Activated CD4-positive, alpha-beta T cell treated with anti-CD3 and anti-CD28 coated beads for 36 hours (primary cell): ENCODE measurements at regions of chr1 and their contacts with region 1.

Region 1: DNA sequence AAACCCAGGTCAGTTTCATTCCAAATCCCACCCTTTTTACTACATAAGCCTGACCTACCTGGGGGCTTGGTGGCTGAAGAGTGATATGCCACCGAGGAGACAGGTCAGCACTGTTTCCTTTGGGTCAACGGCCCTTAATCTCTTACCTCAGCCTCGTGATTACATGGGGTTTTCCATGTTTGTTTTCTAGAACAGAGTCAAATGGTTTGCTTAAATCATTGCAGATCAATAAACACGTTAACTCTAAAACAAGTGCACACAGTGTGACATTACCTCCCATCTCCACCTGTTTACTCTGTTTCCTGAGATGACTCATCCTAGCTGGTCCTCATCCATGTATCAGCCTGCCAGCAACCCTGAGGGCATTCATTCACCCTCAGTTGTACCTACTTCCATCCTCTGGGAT is 40.8 kb upstream of the TP53BP2 start:
- DNase-seq: no peak
- ATAC-seq: no peak
- H3K4me3 Mint-ChIP-seq: no peak overlapping the region
- H3K27ac Mint-ChIP-seq: no peak overlapping the region
- H3K4me1 Mint-ChIP-seq: no peaks in the 10 kb centered on the region
- H3K27me3 Mint-ChIP-seq: no peaks in the 10 kb centered on the region

Region 2: DNA sequence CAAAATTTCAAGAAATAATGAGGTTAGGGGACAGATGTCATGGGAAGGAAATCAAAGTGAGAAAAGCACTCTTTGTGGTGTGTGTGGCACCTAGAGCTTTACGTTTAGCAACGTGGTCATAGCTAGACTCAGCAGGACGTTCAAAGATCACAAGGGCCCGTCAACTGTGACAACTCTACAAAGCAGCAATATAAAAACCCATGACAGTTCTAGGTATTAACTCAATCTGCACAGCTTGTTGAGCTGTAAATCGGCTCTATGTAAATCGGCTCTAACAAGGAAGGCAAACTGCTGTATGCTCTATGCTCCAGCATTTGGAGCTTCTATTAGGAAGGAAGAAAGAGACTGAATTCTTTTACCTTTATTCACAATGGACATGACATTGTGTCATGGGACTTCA is 105.6 kb before region 1 on chr1:
- CTCF ChIA-PET with region 1: no interaction called
- POLR2A ChIA-PET with region 1: no interaction called
- intact Hi-C with region 1: no loop called
- DNase-seq: no peak
- ATAC-seq: no peak
- H3K4me3 Mint-ChIP-seq: no peak overlapping the region
- H3K27ac Mint-ChIP-seq: peak overlapping the region; percentile 32
- H3K4me1 Mint-ChIP-seq: peaks cover 15% of the 10 kb centered on the region
- H3K27me3 Mint-ChIP-seq: no peaks in the 10 kb centered on the region

Region 3: DNA sequence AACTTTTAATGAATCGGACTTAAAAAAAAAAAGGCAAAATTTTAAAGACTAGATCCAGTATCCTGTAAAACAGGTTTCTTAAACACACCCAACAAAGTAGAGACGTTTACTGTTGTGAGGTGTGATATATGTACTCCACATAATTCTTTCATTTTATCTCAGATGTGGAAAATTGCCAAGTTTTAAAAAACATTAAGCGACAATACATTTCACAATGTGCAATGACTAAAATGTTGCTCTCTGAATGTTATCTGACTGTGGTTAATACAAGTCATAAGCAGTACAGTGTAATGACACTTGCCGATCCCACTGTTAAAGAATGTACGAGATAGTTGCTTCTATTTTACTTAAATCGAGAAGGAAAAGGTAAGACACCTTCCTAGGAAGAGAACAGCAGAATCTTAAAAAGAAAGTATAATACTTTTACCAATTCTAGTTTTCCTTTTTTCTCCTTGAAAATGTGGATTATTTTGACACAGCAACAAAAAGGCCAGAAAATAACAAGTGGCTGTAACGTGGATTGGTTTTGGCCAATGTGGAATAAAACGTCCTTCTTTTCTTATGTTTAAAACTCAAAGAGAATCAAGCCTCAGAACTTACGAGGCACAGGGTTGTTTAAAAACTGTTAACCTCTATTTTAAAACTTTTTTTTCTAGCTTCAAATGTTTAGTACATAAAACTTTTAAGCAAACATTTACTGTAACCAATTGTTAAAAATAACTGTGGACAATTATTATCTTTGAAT is 92.2 kb before region 1 on chr1:
- CTCF ChIA-PET with region 1: no interaction called
- POLR2A ChIA-PET with region 1: no interaction called
- intact Hi-C with region 1: no loop called
- DNase-seq: no peak
- ATAC-seq: no peak
- H3K4me3 Mint-ChIP-seq: no peak overlapping the region
- H3K27ac Mint-ChIP-seq: no peak overlapping the region
- H3K4me1 Mint-ChIP-seq: no peaks in the 10 kb centered on the region
- H3K27me3 Mint-ChIP-seq: no peaks in the 10 kb centered on the region

Region 4: DNA sequence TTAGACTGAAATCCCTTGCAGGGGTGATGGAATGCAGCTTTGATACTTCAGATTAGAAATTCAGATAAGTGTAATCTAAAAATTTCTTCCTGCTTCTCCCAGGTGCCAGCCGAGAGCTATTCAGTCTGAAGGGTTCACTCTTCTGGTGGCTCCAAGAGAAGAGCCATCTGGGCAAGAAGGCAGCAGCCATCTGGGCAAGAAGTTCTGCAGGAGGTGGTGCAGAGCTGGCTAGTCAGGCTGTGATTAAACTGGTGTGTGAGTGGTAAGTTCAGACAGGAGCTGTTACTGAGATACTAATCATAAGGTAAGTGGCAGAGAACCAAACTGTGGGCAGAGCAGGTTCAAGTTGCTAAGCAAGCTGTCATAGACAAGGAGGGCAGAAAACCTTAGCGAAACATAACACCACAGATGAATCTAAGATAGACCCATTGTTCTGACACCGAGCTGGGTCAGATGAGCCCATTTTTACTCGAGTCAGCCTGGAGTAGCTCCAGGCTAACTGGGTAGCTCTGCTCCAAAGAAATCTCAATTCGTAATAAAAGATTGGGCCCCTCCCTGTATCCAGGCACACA is 26.4 kb before region 1 on chr1:
- CTCF ChIA-PET with region 1: no interaction called
- POLR2A ChIA-PET with region 1: no interaction called
- intact Hi-C with region 1: loop called in 1 of 2 experiments (anchors 1 kb)
- DNase-seq: no peak
- ATAC-seq: peak; percentile 55
- H3K4me3 Mint-ChIP-seq: no peak overlapping the region
- H3K27ac Mint-ChIP-seq: no peak overlapping the region
- H3K4me1 Mint-ChIP-seq: no peaks in the 10 kb centered on the region
- H3K27me3 Mint-ChIP-seq: no peaks in the 10 kb centered on the region

Region 5: DNA sequence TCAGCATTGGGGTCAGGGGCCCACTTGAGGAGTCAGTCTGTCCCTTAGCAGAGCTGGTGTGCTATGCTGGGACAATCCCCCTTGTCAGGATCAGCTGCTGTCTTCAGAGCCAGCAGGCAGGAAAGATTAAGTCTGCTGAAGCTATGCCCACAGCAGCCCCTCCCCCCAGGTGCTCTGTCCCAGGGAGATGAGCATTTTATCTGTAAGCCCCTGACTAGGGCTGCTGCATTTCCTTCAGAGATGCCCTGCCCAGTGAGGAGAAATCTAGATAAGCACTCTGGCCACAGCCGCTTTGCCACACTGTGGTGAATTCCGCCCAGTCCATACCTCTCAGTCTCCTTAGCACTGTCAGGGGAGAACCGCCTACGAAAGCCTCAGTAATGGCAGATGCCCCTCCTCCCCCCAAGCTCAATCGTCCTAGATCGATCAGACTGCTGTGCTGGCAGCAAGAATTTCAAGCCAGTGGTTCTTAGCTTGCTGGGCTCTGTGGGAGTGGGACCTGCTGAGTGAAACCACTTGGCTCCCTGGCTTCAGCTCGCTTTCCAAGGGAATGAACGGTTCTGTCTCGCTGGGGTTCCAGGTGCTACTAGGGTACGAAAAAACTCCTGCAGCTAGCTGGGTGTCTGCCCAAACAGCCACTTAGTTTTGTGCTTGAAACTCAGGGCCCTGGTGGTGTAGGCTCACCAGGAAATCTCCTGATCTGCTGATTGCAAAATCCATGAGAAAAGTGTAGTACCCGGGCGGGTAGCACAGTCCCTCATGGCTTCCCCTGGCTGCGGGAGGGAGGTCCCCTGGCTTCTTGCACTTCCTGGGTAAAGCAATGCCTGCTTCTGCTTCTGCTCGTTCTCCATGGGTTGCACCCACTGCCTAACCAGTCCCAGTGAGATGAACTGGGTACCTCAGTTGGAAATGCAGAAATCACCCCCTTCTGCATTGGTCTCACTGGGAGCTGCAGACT is 15.6 kb before region 1 on chr1:
- CTCF ChIA-PET with region 1: no interaction called
- POLR2A ChIA-PET with region 1: no interaction called
- intact Hi-C with region 1: no loop called
- DNase-seq: no peak
- ATAC-seq: no peak
- H3K4me3 Mint-ChIP-seq: peak overlapping the region; percentile 19
- H3K27ac Mint-ChIP-seq: no peak overlapping the region
- H3K4me1 Mint-ChIP-seq: no peaks in the 10 kb centered on the region
- H3K27me3 Mint-ChIP-seq: peaks cover 11% of the 10 kb centered on the region

Region 6: GRCh38 chr1:224160171-224160682 is 273.7 kb after region 1 on chr1:
- CTCF ChIA-PET with region 1: no interaction called
- POLR2A ChIA-PET with region 1: no interaction called
- intact Hi-C with region 1: no loop called
- DNase-seq: no peak
- ATAC-seq: no peak
- H3K4me3 Mint-ChIP-seq: no peak overlapping the region
- H3K27ac Mint-ChIP-seq: no peak overlapping the region
- H3K4me1 Mint-ChIP-seq: no peaks in the 10 kb centered on the region
- H3K27me3 Mint-ChIP-seq: no peaks in the 10 kb centered on the region